WTC11 (cell line): ENCODE measurements at regions of chr7 and their contacts with region 1.

Region 1: GRCh38 chr7:1181640-1182039 is 21.6 kb upstream of the ZFAND2A start:
- DNase-seq: no peak
- ATAC-seq: no peak
- H3K4me3 Mint-ChIP-seq: no peak overlapping the region
- H3K27ac Mint-ChIP-seq: no peak overlapping the region
- H3K4me1 Mint-ChIP-seq: no peaks in the 10 kb centered on the region
- H3K27me3 Mint-ChIP-seq: peaks cover 9% of the 10 kb centered on the region
- CTCF ChIP-seq: no peak

Region 2: GRCh38 chr7:1169409-1170368 is 12.0 kb before region 1 on chr7:
- CTCF ChIA-PET with region 1: interaction called, 16 read pairs
- POLR2A ChIA-PET with region 1: no interaction called
- DNase-seq: peak; percentile 95
- ATAC-seq: peak; percentile 99
- H3K4me3 Mint-ChIP-seq: peak overlapping the region; percentile 61
- H3K27ac Mint-ChIP-seq: peak overlapping the region; percentile 42; the same call in 1 of the 2 replicates
- H3K4me1 Mint-ChIP-seq: peaks cover 8% of the 10 kb centered on the region
- H3K27me3 Mint-ChIP-seq: 0 out of 2 replicates have a peak, but pooled peaks cover 3% of the 10 kb centered on the region
- CTCF ChIP-seq: peak; percentile 80

Region 3: GRCh38 chr7:1193593-1194424 is 12.2 kb after region 1 on chr7:
- CTCF ChIA-PET with region 1: interaction called, 25 read pairs
- POLR2A ChIA-PET with region 1: no interaction called
- DNase-seq: peak; percentile 63
- ATAC-seq: peak; percentile 93
- H3K4me3 Mint-ChIP-seq: no peak overlapping the region
- H3K27ac Mint-ChIP-seq: no peak overlapping the region
- H3K4me1 Mint-ChIP-seq: no peaks in the 10 kb centered on the region
- H3K27me3 Mint-ChIP-seq: peaks cover 3% of the 10 kb centered on the region
- CTCF ChIP-seq: no peak